Psoas muscle (tissue), 8 donors: ENCODE measurements at regions of chr3 and their contacts with region 1.

Region 1: GRCh38 chr3:52446631-52447511 is 2.0 kb upstream of the SEMA3G start:
- DNase-seq: peak; percentile 67 to 80
- ATAC-seq: peak; percentile 29 to 59 (median 48)
- H3K4me3 ChIP-seq: no peak overlapping the region
- H3K27ac ChIP-seq: peak overlapping the region; percentile 6
- H3K4me1 ChIP-seq: peaks cover 13% of the 10 kb centered on the region
- H3K27me3 ChIP-seq: no peaks in the 10 kb centered on the region
- CTCF ChIP-seq: peak; percentile 100

Region 2: DNA sequence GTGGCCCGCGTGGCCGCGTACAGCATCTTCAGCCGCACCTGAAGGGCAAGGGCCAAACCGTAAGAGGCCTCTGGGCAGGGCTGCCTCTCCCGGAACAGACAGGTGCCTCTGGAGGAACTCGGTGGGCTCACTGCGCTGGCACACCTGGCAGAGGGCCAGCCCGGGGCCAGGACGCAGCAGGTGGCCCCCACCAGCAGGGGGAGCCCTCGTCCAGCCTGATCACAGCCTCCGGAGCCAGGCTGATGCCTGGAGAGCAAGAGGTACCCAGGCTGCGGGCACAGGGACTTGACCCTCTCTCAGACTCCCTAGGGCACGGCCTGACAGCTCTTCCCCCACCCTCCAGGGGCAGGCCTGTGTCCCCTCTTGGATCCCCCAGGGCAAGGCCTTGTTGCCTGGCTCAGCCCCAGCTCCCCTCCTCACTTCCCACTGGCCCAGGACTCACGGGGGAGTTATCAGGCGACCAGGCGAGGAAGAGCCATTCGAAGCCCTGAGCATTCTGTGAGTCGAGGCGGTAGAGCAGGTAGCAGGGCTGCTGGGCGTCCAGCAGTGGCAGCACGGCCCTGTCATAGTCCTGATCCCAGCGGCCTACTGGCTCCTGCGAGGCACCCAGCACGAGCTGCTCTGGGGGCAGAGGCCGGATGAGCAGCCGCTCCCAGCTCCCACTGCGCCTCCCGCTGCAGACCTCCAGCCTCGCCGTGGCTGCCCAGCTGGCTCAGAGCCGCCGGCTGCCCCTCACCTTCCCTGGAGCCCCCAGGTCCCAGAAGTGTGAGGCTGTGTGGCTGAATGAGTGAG is 215.2 kb before region 1 on chr3:
- intact Hi-C with region 1: loop called in 1 of 2 experiments (anchors 2 kb)
- DNase-seq: peak; percentile 86 to 95
- ATAC-seq: peak; percentile 59 to 69 (median 66)
- H3K4me3 ChIP-seq: peak overlapping the region; percentile 72
- H3K27ac ChIP-seq: peak overlapping the region; percentile 46
- H3K4me1 ChIP-seq: peaks cover 34% of the 10 kb centered on the region
- H3K27me3 ChIP-seq: no peaks in the 10 kb centered on the region
- CTCF ChIP-seq: peak; percentile 95

Region 3: GRCh38 chr3:52428151-52429005 is 18.5 kb before region 1 on chr3:
- intact Hi-C with region 1: loop called in 1 of 2 experiments (anchors 1 kb)
- DNase-seq: no peak
- ATAC-seq: peak; percentile 71 to 91 (median 79)
- H3K4me3 ChIP-seq: no peak overlapping the region
- H3K27ac ChIP-seq: peak overlapping the region; percentile 50
- H3K4me1 ChIP-seq: peaks cover 15% of the 10 kb centered on the region
- H3K27me3 ChIP-seq: no peaks in the 10 kb centered on the region
- CTCF ChIP-seq: peak; percentile 78